Mammary epithelial cell (primary cell): ENCODE measurements at regions of chr6 and their contacts with region 1.

Region 1: GRCh38 chr6:57097596-57097995 is 7.6 kb downstream of the ZNF451 start:
- DNase-seq: peak; percentile 20
- H3K4me3 ChIP-seq: no peak overlapping the region
- H3K27ac ChIP-seq: no peak overlapping the region
- H3K4me1 ChIP-seq: peaks cover 6% of the 10 kb centered on the region
- H3K27me3 ChIP-seq: no peaks in the 10 kb centered on the region
- CTCF ChIP-seq: no peak

Region 2: DNA sequence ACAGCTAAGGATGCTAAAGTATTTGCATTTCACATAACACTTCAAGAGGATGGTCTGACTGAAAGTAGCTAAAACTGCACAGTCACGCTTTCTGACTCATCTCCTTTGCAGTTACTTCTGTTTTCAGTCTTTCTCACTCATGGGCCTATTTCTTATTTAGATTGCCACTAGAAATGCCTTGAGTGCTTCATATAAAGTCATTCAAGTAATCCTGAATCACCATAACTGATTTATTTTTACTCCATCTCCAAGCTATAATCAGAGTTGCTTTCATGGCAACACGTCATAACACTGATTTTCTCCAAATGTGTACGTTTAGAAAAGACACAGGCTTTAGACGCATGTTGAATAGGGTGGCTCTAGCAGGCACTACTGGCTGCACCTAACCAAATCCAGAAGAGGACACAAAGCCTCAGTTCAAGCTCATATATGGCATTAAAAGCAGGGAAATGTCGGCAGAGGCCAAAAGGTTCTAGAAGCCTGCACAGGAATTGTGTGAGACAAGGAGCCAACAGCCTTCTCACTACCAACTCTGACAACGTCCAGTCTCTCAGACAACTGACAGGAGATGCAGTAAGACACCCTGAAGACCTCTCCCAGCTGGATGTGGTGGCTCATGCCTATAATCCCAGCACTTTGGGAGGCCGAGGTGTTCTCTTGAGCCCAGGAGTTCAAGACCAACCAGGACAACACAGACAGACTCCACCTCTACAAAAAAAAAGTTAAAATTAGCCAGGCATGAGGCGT is 206.7 kb before region 1 on chr6:
- CTCF ChIA-PET with region 1: no interaction called
- dilution Hi-C with region 1: no loop called
- in situ Hi-C with region 1: no loop called
- intact Hi-C with region 1: no loop called
- DNase-seq: peak; percentile 63
- H3K4me3 ChIP-seq: no peak overlapping the region
- H3K27ac ChIP-seq: peak overlapping the region; percentile 67
- H3K4me1 ChIP-seq: peaks cover 6% of the 10 kb centered on the region
- H3K27me3 ChIP-seq: no peaks in the 10 kb centered on the region
- CTCF ChIP-seq: no peak

Region 3: GRCh38 chr6:57109880-57110279 is 12.3 kb after region 1 on chr6:
- CTCF ChIA-PET with region 1: no interaction called
- dilution Hi-C with region 1: no loop called
- in situ Hi-C with region 1: no loop called
- intact Hi-C with region 1: loop called (anchors 2 kb)
- DNase-seq: no peak
- H3K4me3 ChIP-seq: no peak overlapping the region
- H3K27ac ChIP-seq: no peak overlapping the region
- H3K4me1 ChIP-seq: no peaks in the 10 kb centered on the region
- H3K27me3 ChIP-seq: no peaks in the 10 kb centered on the region
- CTCF ChIP-seq: no peak